Transverse colon (tissue), 4 donors: ENCODE measurements at regions of chr4 and their contacts with region 1.

Region 1: GRCh38 chr4:160819791-160820190 is 1344.0 kb downstream of the FSTL5 start:
- DNase-seq: no peak
- H3K4me3 ChIP-seq: no peak overlapping the region
- H3K27ac ChIP-seq: no peak overlapping the region
- H3K4me1 ChIP-seq: no peaks in the 10 kb centered on the region
- H3K27me3 ChIP-seq: no peaks in the 10 kb centered on the region
- CTCF ChIP-seq: no peak
- EP300 ChIP-seq: no peak
- POLR2A ChIP-seq: no peak

Region 2: DNA sequence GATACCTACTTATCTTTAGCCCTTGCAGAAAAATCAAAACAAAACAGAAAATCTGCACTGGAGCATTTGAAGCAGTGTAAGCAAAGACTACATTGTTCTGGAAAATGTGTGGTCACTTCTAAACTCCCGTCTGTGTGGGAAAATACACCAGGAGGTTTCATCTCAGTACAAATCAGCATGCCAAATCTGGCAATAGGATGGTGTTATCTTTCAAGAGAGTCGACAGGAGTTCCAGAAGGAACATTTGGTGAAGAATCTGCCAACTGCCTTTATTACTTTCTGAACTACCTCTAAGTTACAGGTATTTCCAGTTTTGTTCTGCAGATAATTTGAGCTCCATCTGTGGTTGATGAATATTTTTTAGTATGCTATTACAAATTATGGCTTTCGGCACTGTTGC is 368.9 kb before region 1 on chr4:
- in situ Hi-C with region 1: no loop called
- intact Hi-C with region 1: no loop called
- DNase-seq: no peak
- H3K4me3 ChIP-seq: no peak overlapping the region
- H3K27ac ChIP-seq: no peak overlapping the region
- H3K4me1 ChIP-seq: no peaks in the 10 kb centered on the region
- H3K27me3 ChIP-seq: no peaks in the 10 kb centered on the region
- CTCF ChIP-seq: no peak
- EP300 ChIP-seq: no peak
- POLR2A ChIP-seq: no peak

Region 3: DNA sequence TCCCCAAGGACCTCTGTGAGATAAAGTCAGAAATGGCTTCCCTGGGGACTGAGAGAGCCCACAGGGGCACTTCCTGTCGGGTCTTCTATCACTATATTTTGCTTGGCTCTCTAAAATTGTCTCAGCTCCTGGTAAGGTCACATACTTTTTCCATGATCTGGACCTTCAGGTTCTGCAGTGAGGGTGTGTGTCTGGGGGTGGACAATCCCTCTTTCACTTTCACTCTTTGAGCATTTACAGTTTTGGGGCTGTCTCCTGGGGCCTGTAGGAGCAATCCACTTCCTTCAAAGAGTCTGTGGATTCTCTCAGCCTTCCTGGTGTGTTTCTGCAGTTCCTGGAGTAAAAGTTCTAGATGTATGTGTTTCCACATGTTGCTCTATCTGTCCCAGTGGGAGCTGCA is 1008.3 kb after region 1 on chr4:
- in situ Hi-C with region 1: no loop called
- intact Hi-C with region 1: loop called (anchors 5 kb)
- DNase-seq: no peak
- H3K4me3 ChIP-seq: no peak overlapping the region
- H3K27ac ChIP-seq: no peak overlapping the region
- H3K4me1 ChIP-seq: no peaks in the 10 kb centered on the region
- H3K27me3 ChIP-seq: no peaks in the 10 kb centered on the region
- CTCF ChIP-seq: no peak
- EP300 ChIP-seq: no peak
- POLR2A ChIP-seq: no peak